Thyroid gland (tissue), 4 donors: ENCODE measurements at regions of chr16 and their contacts with region 1.

Region 1: GRCh38 chr16:84726079-84726668 is 26.4 kb downstream of the USP10 start:
- DNase-seq: peak; percentile 90 to 93
- H3K4me3 ChIP-seq: no peak overlapping the region
- H3K27ac ChIP-seq: no peak overlapping the region
- H3K4me1 ChIP-seq: peaks cover 21 to 31% of the 10 kb centered on the region in 2 donors
- H3K27me3 ChIP-seq: no peaks in the 10 kb centered on the region
- CTCF ChIP-seq: peak; percentile 79 to 93 (median 90)
- POLR2A ChIP-seq: no peak

Region 2: GRCh38 chr16:83187405-83187804 is 1538.8 kb before region 1 on chr16:
- intact Hi-C with region 1: no loop called
- DNase-seq: no peak
- H3K4me3 ChIP-seq: no peak overlapping the region
- H3K27ac ChIP-seq: no peak overlapping the region
- H3K4me1 ChIP-seq: no peaks in the 10 kb centered on the region
- H3K27me3 ChIP-seq: no peaks in the 10 kb centered on the region
- CTCF ChIP-seq: no peak
- POLR2A ChIP-seq: no peak

Region 3: DNA sequence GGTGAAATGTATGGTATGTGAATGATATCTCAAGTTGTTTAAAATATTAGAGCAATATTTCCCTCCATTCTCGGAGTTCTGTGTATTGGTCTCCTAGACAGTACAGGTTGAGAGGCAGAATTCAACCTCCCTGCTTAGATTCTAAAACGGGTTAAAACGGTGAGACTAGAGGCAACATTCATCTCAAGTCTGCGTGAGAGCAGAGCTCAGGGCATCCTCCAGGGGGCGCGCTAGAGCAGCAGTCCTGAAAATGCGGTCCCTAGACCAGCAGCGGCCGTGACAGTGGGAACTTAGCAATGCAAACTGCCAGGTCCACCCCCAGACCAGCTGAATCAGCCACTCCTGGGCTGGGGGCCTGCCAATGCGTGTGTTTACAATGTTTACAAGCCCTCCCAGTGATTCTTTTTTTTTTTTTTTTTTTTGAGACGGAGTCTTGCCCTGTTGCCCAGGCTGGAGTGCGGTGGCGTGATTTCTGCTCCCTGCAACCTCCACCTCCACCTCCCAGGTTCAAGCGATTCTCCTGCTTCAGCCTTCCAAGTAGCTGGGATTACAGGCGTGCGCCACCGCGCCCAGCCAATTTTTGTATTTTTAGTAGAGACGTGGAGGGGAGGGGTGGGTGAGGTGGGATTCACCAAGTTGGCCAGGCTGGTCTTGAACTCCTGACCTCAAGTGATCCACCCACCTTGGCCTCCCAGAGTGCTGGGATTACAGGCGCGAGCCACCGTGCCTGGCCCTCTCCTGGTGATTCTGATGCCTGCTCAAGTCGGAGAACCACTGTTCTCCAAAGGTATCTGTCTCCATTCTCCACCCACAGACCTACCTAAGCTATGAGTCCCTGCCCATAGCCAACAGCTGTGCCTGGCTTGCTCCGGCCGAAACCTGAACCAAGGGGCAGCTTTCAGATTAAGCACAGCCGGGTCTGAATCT is 53.6 kb before region 1 on chr16:
- intact Hi-C with region 1: loop called (anchors 2 kb)
- DNase-seq: peak; percentile 72 to 79
- H3K4me3 ChIP-seq: no peak overlapping the region
- H3K27ac ChIP-seq: no peak overlapping the region
- H3K4me1 ChIP-seq: no peaks in the 10 kb centered on the region
- H3K27me3 ChIP-seq: no peaks in the 10 kb centered on the region
- CTCF ChIP-seq: peak; percentile 74 to 89 (median 85)
- POLR2A ChIP-seq: no peak